ENCODE measurements at regions of chr5 and their contacts with region 1.

Region 1: GRCh38 chr5:148708854-148709253 is 54.5 kb upstream of the HTR4 start:
- DNase-seq: no peak
- H3K4me3 Mint-ChIP-seq: no peak overlapping the region
- H3K27ac Mint-ChIP-seq: no peak overlapping the region
- H3K4me1 Mint-ChIP-seq: peaks cover 8% of the 10 kb centered on the region
- H3K27me3 Mint-ChIP-seq: no peaks in the 10 kb centered on the region

Region 2: DNA sequence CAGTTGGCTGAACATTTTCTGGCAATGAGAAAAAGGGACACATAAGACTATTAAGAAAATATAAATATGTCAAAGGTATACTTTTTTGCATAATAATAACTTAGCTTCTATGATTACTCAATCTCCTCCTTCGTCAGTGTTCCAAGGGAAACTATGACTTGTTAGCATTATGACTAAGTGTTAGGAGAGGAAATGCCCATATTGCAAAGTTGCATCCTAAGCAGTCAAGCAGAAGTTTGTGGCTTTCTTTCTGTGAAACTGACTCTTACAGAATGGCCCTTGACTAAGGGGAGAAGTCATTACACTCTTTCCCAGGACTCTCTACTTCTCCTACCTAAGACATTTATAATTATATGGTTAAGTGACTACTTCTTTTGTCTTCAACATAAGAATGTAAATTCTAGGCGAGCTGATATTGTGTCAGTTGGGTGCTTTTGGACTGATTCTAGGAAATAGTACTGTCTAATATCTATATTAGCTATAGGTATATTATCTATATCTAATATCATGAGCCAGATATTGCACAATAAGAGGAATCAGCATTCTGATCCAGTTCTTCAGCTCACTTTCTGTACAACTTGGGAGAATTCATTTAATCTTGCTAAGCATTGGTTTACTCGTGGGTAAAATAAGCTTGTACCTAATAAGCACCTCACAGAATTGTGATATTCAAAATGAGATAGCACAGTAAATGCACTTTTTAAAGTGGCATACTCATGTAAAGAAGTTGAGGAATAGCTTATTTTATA is 522.4 kb before region 1 on chr5:
- intact Hi-C with region 1: loop called (anchors 1 kb)
- DNase-seq: no peak
- H3K4me3 Mint-ChIP-seq: peak overlapping the region; percentile 7
- H3K27ac Mint-ChIP-seq: peak overlapping the region; percentile 52
- H3K4me1 Mint-ChIP-seq: peaks cover 24% of the 10 kb centered on the region
- H3K27me3 Mint-ChIP-seq: no peaks in the 10 kb centered on the region

Region 3: GRCh38 chr5:148620696-148621095 is 88.2 kb before region 1 on chr5:
- intact Hi-C with region 1: loop called (anchors 1 kb)
- DNase-seq: peak; percentile 48
- H3K4me3 Mint-ChIP-seq: no peak overlapping the region
- H3K27ac Mint-ChIP-seq: peak overlapping the region; percentile 28
- H3K4me1 Mint-ChIP-seq: peaks cover 36% of the 10 kb centered on the region
- H3K27me3 Mint-ChIP-seq: peaks cover 24% of the 10 kb centered on the region

Region 4: DNA sequence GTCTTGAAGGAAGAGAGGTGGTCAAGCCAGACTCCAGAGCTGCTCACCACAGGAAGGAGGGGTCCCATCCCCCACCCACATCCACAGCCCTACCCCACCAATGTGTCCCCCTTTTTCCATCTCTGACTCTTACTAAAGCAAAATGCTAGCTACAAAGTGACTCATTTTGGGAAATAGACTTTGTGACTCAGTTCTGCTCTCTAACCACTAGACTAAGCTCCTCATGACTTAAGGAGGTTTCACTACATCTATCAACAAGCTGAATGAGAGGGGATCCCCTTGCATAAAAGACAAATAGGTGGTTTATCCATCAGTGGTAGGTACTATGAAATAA is 82.4 kb after region 1 on chr5:
- intact Hi-C with region 1: loop called (anchors 1 kb)
- DNase-seq: no peak
- H3K4me3 Mint-ChIP-seq: no peak overlapping the region
- H3K27ac Mint-ChIP-seq: peak overlapping the region; percentile 56
- H3K4me1 Mint-ChIP-seq: peaks cover 31% of the 10 kb centered on the region
- H3K27me3 Mint-ChIP-seq: peaks cover 17% of the 10 kb centered on the region

Region 5: GRCh38 chr5:149422366-149423048 is 713.7 kb after region 1 on chr5:
- intact Hi-C with region 1: no loop called
- DNase-seq: no peak
- H3K4me3 Mint-ChIP-seq: no peak overlapping the region
- H3K27ac Mint-ChIP-seq: no peak overlapping the region
- H3K4me1 Mint-ChIP-seq: peaks cover 5% of the 10 kb centered on the region
- H3K27me3 Mint-ChIP-seq: peaks cover 5% of the 10 kb centered on the region

Measured in activated T-helper 1 cell treated with anti-CD3 and anti-CD28 coated beads, Interleukin-12 subunit alpha, Interleukin-12 subunit beta, Interleukin-2, Interleukin-4 antibody, amounts not matched to agents 30 ng/mL and 10 ng/mL and 1 ng/mL, durations not matched to agents 14 hours and 24 hours and 36 hours (primary cell).